AG04450 (cell line): ENCODE measurements at regions of chr1 and their contacts with region 1.

Region 1: DNA sequence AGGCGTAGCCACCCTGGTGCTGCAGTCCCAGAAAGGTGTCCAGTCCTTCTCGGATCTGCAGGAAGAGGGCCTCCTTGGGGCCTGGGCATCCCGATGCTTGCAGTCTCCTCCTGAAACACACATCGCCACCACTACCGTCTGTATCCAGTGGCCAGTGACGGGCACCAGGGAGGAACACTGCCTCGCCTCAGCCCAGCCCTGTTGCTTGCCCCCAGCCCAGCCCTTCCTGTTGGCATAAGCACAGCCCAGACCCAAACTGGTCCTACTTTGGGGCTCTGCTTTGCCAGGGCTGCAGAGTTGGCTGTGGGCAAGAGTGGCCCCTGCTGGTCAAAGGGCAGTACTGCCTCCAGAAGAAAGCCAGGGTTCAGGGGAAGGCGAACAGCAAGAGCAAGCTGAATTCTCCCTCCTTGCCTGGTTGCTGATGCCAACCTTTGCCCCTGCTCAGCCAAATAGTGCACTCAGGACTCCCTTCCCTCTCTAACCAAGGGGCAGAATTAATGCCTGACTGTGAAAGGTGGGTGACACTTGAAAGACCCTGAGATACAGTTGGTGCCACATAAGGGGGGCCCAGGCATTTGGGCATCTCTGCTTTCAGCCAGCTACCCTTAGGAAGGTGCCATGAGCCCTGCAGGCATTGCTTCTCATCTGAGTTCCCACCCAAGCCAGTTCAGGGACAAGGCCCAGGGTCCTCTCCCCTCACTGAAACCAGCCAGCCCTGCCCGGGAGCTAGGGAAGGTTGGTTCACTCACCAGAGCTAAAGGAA is 11.1 kb upstream of the ARHGEF2 start:
- DNase-seq: no peak
- H3K4me3 ChIP-seq: peak overlapping the region; percentile 39
- H3K27ac ChIP-seq: no peak overlapping the region
- H3K27me3 ChIP-seq: no peaks in the 10 kb centered on the region
- CTCF ChIP-seq: peak; percentile 99

Region 2: DNA sequence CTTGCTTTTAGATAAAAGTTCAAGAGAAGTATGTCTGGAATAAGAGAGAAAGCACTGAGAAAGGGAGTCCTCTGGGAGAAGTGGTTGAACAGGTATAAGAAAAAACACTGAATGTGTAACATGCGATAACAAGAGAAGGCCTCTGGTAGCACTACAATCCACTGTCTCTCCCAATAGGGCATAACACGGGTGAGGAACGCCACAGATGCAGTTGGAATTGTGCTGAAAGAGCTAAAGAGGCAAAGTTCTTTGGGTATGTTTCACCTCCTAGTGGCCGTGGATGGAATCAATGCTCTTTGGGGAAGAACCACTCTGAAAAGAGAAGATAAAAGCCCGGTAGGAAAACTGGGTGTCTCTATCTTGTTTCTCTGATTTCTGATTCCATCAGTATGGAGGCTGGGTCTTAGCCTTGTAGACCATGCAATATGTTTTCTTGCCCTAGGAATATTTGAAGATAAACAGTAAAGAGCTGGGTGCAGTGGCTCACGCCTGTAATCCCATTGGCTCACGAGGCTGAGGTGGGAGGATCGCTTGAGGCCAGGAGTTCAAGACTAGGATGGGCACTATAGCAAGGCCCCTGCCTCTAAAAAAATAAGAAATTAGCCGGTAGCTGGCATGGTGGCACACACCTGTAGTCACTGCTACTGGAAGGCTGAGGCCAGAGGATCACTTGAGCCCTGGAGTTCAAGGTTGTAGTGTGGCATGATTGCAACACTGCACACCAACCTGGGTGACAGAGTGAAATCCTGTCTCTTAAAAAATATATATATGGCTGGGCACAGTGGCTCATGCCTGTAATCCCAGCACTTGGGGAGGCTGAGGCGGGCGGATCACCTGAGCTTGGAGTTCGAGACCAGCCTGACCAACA is 260.2 kb before region 1 on chr1:
- CTCF ChIA-PET with region 1: no interaction called
- POLR2A ChIA-PET with region 1: no interaction called
- DNase-seq: peak; percentile 33
- H3K4me3 ChIP-seq: no peak overlapping the region
- H3K27ac ChIP-seq: no peak overlapping the region
- H3K27me3 ChIP-seq: no peaks in the 10 kb centered on the region
- CTCF ChIP-seq: peak; percentile 80

Region 3: DNA sequence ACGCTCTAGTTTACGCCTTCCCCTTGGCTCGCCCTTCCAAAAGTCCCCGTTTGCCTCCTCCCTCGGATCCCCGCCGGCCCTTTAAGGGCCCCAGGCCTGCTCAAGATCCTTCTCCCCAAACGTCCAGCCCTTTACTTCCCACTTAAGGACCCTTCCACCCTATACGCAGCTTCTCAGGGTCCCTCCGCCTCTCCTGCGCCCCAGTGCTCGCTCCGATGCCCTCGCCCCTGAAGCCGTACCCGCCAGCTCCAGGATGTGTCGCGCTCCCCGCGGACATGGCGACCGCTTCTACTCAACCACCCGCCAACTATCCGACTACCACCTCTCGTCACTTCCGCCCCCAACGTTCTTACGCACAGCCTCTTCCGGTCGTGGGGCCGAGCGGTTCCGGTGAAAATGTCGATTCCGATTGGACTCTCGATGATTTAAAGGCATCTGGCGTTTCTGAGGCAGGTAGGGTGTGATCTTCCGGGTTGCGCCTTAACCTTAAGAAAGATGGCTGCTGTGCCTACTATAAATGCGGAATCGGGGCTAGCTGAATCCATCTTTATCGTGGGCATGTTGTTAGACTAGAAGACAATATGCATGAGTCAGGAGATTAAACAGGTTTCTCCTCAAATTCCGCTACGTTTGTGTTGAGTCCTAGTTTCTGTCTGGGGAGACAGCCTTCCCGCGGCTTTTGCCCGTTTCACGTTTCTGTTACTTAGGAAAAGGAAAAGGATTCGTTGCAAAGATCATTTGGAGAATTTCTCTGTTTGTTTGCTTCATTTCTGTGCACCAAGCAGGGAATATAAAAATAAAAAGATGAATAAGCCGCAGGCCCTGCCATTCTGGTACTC is 55.1 kb before region 1 on chr1 and contains the start of gene KHDC4:
- CTCF ChIA-PET with region 1: interaction called, 57 read pairs
- POLR2A ChIA-PET with region 1: interaction called, 7 read pairs
- DNase-seq: peak; percentile 96
- H3K4me3 ChIP-seq: peak within 1 kb of the TSS; percentile 97
- H3K27ac ChIP-seq: peak within 1 kb of the TSS; percentile 81
- H3K27me3 ChIP-seq: no peaks in the 10 kb centered on the region
- CTCF ChIP-seq: peak; percentile 12; the same call in 1 of the 2 replicates
- polyA plus RNA-seq, gene KHDC4: 34.9 and 39.0 TPM in 2 replicates

Region 4: GRCh38 chr1:155970531-155971167 is 18.8 kb before region 1 on chr1:
- CTCF ChIA-PET with region 1: interaction called, 27 read pairs
- POLR2A ChIA-PET with region 1: interaction called, 3 read pairs
- DNase-seq: no peak
- H3K4me3 ChIP-seq: peak overlapping the region; percentile 31
- H3K27ac ChIP-seq: peak overlapping the region; percentile 75
- H3K27me3 ChIP-seq: no peaks in the 10 kb centered on the region
- CTCF ChIP-seq: no peak